ENCODE measurements at regions of chrX and their contacts with region 1.

Region 1: GRCh38 chrX:23901805-23902204 is 5.9 kb downstream of the APOO start:
- DNase-seq: no peak
- H3K4me3 ChIP-seq: peak overlapping the region in 2 of 4 donors; percentile 17 to 22
- H3K27ac ChIP-seq: peak overlapping the region; percentile 55 to 76 (median 66)
- H3K4me1 ChIP-seq: peaks cover 13 to 46% (median 32%) of the 10 kb centered on the region in 4 donors
- H3K27me3 ChIP-seq: no peaks in the 10 kb centered on the region
- CTCF ChIP-seq: peak; percentile 32 to 52 (median 51)
- EP300 ChIP-seq: no peak
- POLR2A ChIP-seq: no peak

Region 2: DNA sequence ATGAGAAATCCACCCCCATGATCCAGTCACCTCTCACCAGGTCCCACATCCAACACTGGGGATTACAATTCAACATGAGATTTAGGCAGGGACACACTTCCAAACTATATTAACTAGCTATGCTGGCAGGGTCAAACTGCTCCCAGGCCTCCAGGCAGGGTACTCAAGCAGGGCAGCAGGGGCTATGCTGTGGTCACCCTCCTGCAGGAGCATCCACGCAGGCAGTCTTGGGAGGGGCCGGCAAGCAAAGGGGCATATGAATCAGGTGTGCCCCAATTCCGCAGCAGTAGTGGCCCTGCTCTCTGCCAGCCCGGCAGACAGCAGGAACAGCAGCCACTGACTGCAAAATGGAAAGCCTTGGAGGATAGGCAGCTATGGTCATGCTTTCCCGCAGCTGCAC is 309.1 kb before region 1 on chrX:
- intact Hi-C with region 1: no loop called
- DNase-seq: no peak
- H3K4me3 ChIP-seq: no peak overlapping the region
- H3K27ac ChIP-seq: no peak overlapping the region
- H3K4me1 ChIP-seq: no peaks in the 10 kb centered on the region
- H3K27me3 ChIP-seq: no peaks in the 10 kb centered on the region
- CTCF ChIP-seq: no peak
- EP300 ChIP-seq: no peak
- POLR2A ChIP-seq: no peak

Region 3: GRCh38 chrX:23694606-23695005 is 207.2 kb before region 1 on chrX:
- intact Hi-C with region 1: loop called (anchors 2 kb)
- DNase-seq: no peak
- H3K4me3 ChIP-seq: no peak overlapping the region
- H3K27ac ChIP-seq: no peak overlapping the region
- H3K4me1 ChIP-seq: no peaks in the 10 kb centered on the region
- H3K27me3 ChIP-seq: no peaks in the 10 kb centered on the region
- CTCF ChIP-seq: peak; percentile 21 to 53 (median 48)
- EP300 ChIP-seq: no peak
- POLR2A ChIP-seq: no peak

Region 4: DNA sequence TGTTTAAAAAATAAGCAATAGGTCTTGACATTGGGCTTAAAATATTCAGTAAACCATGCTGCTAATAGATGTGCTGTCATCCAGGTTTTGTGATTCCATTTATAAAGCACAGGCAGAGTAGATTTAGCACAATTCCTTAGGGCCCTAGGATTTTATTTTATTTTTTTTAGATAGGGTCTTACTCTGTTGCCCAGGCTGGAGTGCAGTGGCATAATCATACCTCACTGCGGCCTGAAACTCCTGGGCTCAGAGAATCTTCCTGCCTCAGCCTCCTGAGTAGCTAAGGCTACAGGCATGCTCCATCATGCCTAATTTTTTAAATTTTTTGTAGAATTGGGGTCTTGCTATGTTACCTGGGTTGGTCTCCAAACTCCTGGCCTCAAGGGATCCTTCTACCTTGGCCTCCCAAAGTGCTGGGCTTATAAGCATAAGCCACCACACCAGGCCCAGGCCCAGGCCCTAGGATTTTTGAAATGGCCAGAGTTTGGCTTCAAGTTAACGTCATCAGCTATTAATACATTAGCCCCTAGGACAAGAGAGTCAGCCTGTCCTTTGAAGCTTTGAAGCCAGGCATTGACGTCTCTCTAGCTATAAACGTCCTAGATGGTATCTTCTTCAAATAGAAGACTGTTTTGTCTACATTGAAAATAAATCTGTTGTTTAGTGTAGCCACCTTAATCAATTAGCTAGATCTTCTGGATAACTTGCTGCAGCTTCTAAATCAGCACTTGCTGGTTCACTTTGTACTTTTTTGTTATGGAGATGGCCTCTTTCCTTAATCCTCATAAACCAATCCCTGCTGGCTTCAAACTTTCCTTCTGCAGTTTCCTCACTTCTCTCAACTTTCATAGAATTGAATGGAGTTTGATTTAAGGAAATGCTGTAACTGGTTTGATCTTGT is 188.7 kb after region 1 on chrX:
- intact Hi-C with region 1: no loop called
- DNase-seq: no peak
- H3K4me3 ChIP-seq: no peak overlapping the region
- H3K27ac ChIP-seq: peak overlapping the region in 1 of 4 donors; percentile 4
- H3K4me1 ChIP-seq: peaks cover 0 to 10% (median 8%) of the 10 kb centered on the region in 4 donors
- H3K27me3 ChIP-seq: no peaks in the 10 kb centered on the region
- CTCF ChIP-seq: no peak
- EP300 ChIP-seq: no peak
- POLR2A ChIP-seq: no peak